Prostate gland (tissue), 2 donors: ENCODE measurements at regions of chr16 and their contacts with region 1.

Region 1: DNA sequence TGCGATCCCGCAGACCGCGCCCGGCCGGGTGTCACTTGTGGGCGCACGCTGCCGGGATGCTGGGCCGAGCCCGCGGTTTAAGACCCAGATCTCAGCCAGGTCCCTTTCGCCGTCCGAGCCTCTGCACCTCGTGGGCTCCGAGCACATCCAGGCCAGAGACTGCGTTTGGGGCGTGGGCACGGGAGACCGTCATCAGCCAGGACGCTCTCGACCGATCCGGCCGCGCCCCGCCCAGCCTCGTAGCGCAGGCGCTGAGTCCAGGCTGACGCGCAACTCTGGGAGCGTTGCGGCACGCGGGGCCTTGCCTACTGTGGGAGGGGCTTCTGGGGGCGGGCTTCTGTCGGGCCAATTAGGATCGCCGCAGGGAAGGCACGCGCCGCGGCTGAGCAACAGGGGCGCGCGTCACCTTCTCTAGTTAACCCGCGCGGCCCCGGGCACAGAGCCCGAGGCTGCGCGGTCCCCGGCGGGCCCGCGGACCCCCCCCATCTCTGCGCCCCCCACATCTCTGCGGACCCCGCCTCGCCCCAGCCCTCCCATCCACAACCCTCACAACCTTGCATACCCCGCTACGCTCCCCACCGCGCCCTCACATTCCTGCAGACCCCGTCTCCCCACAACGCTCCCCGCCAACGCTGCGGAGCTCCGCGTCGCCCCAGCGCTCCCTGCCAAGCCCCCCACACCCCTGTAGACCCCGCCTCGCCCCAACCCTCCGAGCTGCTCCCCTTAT is 722 bp upstream of the CEMP1 start:
- DNase-seq: peak; percentile 98
- H3K4me3 ChIP-seq: peak overlapping the region; percentile 49 to 62
- H3K27ac ChIP-seq: peak overlapping the region; percentile 93 to 97
- H3K4me1 ChIP-seq: peaks cover 6% of the 10 kb centered on the region
- H3K27me3 ChIP-seq: no peaks in the 10 kb centered on the region
- CTCF ChIP-seq: peak in 1 of 4 experiments; percentile 24
- POLR2A ChIP-seq: peak; percentile 92

Region 2: GRCh38 chr16:2365397-2366294 is 166.3 kb before region 1 on chr16:
- intact Hi-C with region 1: no loop called
- DNase-seq: no peak
- H3K4me3 ChIP-seq: no peak overlapping the region
- H3K27ac ChIP-seq: no peak overlapping the region
- H3K4me1 ChIP-seq: no peaks in the 10 kb centered on the region
- H3K27me3 ChIP-seq: no peaks in the 10 kb centered on the region
- CTCF ChIP-seq: no peak
- POLR2A ChIP-seq: no peak

Region 3: GRCh38 chr16:2595393-2596205 is 63.7 kb after region 1 on chr16:
- intact Hi-C with region 1: loop called (anchors 10 kb)
- DNase-seq: no peak
- H3K4me3 ChIP-seq: no peak overlapping the region
- H3K27ac ChIP-seq: no peak overlapping the region
- H3K4me1 ChIP-seq: no peaks in the 10 kb centered on the region
- H3K27me3 ChIP-seq: no peaks in the 10 kb centered on the region
- CTCF ChIP-seq: no peak
- POLR2A ChIP-seq: no peak